Activated CD8-positive, alpha-beta T cell treated with anti-CD3 and anti-CD28 coated beads for 36 hours (primary cell): ENCODE measurements at regions of chr13 and their contacts with region 1.

Region 1: GRCh38 chr13:45367358-45367757 is 26.4 kb upstream of the TPT1 start:
- DNase-seq: peak; percentile 98
- ATAC-seq: peak; percentile 99
- H3K4me3 Mint-ChIP-seq: peak overlapping the region; percentile 46
- H3K27ac Mint-ChIP-seq: peak overlapping the region; percentile 97
- H3K4me1 Mint-ChIP-seq: peaks cover 62% of the 10 kb centered on the region
- H3K27me3 Mint-ChIP-seq: no peaks in the 10 kb centered on the region
- CTCF ChIP-seq: no peak

Region 2: GRCh38 chr13:45340926-45341750 is 26.2 kb before region 1 on chr13 and contains the start of gene TPT1:
- CTCF ChIA-PET with region 1: interaction called, 17 read pairs
- POLR2A ChIA-PET with region 1: interaction called, 14 read pairs
- intact Hi-C with region 1: loop called (anchors 2 kb)
- DNase-seq: peak; percentile 99
- ATAC-seq: peak; percentile 88
- H3K4me3 Mint-ChIP-seq: peak within 1 kb of the TSS; percentile 97
- H3K27ac Mint-ChIP-seq: peak within 1 kb of the TSS; percentile 100
- H3K4me1 Mint-ChIP-seq: peaks cover 44% of the 10 kb centered on the region
- H3K27me3 Mint-ChIP-seq: no peaks in the 10 kb centered on the region
- CTCF ChIP-seq: no peak
- total RNA-seq, gene TPT1: 3,533 to 3,563 TPM

Region 3: GRCh38 chr13:45385907-45386553 is 18.7 kb after region 1 on chr13:
- CTCF ChIA-PET with region 1: interaction called, 103 read pairs
- POLR2A ChIA-PET with region 1: no interaction called
- intact Hi-C with region 1: no loop called
- DNase-seq: no peak
- ATAC-seq: no peak
- H3K4me3 Mint-ChIP-seq: no peak overlapping the region
- H3K27ac Mint-ChIP-seq: no peak overlapping the region
- H3K4me1 Mint-ChIP-seq: peaks cover 7% of the 10 kb centered on the region
- H3K27me3 Mint-ChIP-seq: no peaks in the 10 kb centered on the region
- CTCF ChIP-seq: no peak

Region 4: DNA sequence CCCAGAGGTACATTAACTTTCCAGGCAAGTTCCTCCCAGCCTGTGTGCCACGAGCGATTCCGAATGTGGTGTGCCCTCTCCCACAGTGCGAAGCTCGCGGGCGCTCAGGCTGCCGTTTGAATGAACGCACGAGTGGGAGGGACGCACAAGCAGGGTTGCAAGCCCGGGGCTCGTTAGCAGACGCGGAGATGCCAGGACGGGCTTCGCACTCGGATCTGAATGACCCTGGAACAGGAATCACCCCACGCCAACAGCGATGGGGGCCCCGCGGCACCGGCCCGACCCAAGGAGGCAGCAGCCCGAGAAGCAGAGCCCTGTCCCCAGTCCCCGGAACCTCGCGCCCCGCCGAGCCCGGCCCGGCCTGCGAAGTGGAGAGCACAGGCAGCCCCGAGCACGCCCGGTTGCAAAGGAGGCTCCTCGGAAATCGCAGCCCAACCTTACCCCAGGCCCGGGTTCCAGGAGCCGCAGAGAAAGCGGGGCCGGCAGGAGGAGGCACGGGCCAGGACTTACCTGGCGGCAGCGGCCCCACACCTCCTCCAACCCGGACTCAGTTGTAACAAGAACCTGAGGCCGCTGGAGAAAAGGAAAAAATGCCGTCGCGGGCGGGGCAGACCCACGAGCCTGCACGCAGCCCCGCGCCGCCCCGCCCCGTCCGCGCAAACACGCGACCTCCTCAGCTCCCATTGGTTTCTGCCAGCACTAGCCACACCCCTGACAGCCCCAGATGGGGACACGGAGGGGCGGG is 50.6 kb after region 1 on chr13 and contains the start of gene SLC25A30:
- CTCF ChIA-PET with region 1: interaction called, 37 read pairs
- POLR2A ChIA-PET with region 1: interaction called, 3 read pairs
- intact Hi-C with region 1: no loop called
- DNase-seq: peak; percentile 94
- ATAC-seq: peak; percentile 92
- H3K4me3 Mint-ChIP-seq: peak within 1 kb of the TSS; percentile 86
- H3K27ac Mint-ChIP-seq: peak within 1 kb of the TSS; percentile 94
- H3K4me1 Mint-ChIP-seq: peaks cover 18% of the 10 kb centered on the region
- H3K27me3 Mint-ChIP-seq: no peaks in the 10 kb centered on the region
- CTCF ChIP-seq: no peak
- total RNA-seq, gene SLC25A30: 18.9 to 21.2 TPM

Region 5: DNA sequence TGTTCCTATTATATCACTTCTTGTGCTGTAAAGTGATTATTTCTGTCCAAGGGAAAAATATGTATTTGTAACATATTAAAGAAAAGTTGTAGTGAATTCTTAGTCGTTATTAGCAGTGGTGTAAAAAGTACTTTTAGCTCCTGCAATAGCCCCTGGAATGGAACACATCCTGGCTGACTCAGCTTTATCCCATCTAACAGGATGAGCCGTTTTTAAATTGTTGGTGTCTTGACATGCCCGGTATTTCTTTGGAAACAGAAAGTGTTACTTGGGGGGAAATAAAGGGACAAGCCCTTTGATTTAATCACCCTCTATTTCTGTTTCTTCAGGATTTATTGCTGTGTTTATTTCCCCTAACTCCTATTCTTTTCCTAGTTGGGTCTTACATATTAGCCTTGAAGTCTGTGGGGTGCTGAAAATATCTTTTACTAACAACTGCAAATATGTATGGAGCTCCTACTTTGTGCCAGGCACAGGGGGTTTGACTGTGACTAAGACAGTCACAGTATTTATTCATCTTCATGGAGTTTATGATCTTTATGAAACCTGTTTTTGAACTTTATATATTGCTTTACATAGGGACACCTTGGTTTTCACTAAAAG is 115.3 kb after region 1 on chr13:
- CTCF ChIA-PET with region 1: interaction called, 25 read pairs
- POLR2A ChIA-PET with region 1: interaction called, 4 read pairs
- intact Hi-C with region 1: no loop called
- DNase-seq: no peak
- ATAC-seq: no peak
- H3K4me3 Mint-ChIP-seq: no peak overlapping the region
- H3K27ac Mint-ChIP-seq: peak overlapping the region; percentile 9
- H3K4me1 Mint-ChIP-seq: peaks cover 2% of the 10 kb centered on the region
- H3K27me3 Mint-ChIP-seq: no peaks in the 10 kb centered on the region
- CTCF ChIP-seq: no peak